Right ventricle myocardium superior (tissue), 1 donor: ENCODE measurements at regions of chr19 and their contacts with region 1.

Region 1: DNA sequence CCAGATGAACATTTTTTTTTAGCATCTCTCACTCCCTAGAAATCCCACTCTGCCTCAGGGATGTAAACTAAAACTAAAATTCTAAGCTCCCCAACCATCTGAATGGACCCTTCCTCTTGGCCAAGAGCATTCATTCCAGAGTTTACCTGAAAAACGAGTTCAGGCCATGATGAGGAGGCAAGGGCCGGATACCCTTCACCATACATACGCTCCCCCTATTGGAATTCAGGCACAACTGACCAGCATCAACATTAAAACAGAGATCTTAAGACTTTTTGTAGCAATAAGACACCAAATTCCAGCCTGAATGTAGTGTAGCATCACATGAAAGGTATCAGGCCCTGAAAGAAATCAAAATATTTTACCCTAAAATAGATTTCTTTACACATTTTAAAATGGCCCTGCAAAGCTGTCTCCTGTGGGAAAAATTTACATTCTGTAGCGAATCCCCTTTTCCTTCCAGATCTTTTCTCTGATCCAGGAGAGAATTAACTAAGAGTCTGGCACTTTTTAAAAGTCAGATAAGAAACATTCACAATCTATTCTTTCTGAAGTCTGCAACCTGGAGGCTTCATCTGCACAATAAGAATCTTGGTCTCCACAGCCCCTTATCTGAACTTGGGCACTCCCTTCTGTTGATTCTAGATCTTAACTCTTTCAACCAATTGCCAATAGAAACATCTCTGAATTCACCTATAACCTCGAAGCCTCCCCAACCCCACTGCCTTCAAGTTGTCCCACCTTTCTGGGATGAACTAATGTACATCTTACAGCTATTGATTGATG is 888.5 kb downstream of the UQCRFS1 start:
- DNase-seq: no peak
- ATAC-seq: no peak

Region 2: GRCh38 chr19:27974082-27974513 is 350.4 kb before region 1 on chr19:
- intact Hi-C with region 1: loop called (anchors 5 kb)
- DNase-seq: no peak
- ATAC-seq: no peak

Region 3: GRCh38 chr19:28288572-28289264 is 35.8 kb before region 1 on chr19:
- intact Hi-C with region 1: no loop called
- DNase-seq: no peak
- ATAC-seq: peak; percentile 27